T-cell (primary cell): ENCODE measurements at regions of chr21 and their contacts with region 1.

Region 1: DNA sequence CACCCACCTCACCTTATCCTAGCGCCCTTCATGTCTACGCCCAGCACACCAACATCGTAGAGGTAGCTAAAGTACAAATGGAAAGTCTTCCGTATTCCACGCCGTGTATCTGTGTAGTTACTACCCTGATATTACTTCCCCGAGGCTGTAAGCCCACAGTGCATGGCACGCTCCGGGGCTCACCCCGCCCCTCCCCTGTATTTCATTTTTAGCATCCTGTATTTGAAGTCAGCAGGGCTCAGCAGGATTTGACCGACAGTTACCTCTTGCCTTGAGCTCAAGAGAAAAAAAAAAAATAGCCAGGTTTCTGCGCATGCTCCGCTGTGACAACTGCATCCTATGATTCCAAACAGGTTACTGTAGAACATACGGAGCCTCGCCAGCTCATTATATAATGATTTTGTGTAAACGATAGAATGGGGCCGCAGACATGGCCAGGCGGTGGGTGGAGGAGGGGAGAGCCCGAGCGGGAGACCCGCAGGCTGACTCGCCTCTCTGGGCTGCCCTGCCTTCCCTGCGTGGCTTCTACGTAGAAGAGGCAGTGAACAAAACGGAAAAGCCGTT is 1.3 kb downstream of the ABCG1 start:
- DNase-seq: peak in 34 of 35 experiments; percentile 57 to 95 (median 87)
- ATAC-seq: peak; percentile 83 to 91 (median 87)
- H3K4me3 ChIP-seq: peak overlapping the region; percentile 88 to 89
- H3K4me3 Mint-ChIP-seq: peak overlapping the region; percentile 81 to 87 (median 87)
- H3K27ac ChIP-seq: peak overlapping the region; percentile 89
- H3K27ac Mint-ChIP-seq: peak overlapping the region; percentile 18 to 73
- H3K4me1 ChIP-seq: peaks cover 17 to 42% of the 10 kb centered on the region in 2 experiments
- H3K4me1 Mint-ChIP-seq: peaks cover 32 to 39% (median 35%) of the 10 kb centered on the region in 3 donors
- H3K27me3 ChIP-seq: no peaks in the 10 kb centered on the region
- H3K27me3 Mint-ChIP-seq: no peaks in the 10 kb centered on the region

Region 2: GRCh38 chr21:40882192-40882915 is 1337.9 kb before region 1 on chr21:
- CTCF ChIA-PET with region 1: no interaction called
- POLR2A ChIA-PET with region 1: no interaction called
- DNase-seq: no peak
- ATAC-seq: no peak
- H3K4me3 ChIP-seq: no peak overlapping the region
- H3K4me3 Mint-ChIP-seq: no peak overlapping the region
- H3K27ac ChIP-seq: no peak overlapping the region
- H3K27ac Mint-ChIP-seq: no peak overlapping the region
- H3K4me1 ChIP-seq: no peaks in the 10 kb centered on the region
- H3K4me1 Mint-ChIP-seq: no peaks in the 10 kb centered on the region
- H3K27me3 ChIP-seq: no peaks in the 10 kb centered on the region
- H3K27me3 Mint-ChIP-seq: peaks cover 0 to 4% of the 10 kb centered on the region in 2 donors

Region 3: DNA sequence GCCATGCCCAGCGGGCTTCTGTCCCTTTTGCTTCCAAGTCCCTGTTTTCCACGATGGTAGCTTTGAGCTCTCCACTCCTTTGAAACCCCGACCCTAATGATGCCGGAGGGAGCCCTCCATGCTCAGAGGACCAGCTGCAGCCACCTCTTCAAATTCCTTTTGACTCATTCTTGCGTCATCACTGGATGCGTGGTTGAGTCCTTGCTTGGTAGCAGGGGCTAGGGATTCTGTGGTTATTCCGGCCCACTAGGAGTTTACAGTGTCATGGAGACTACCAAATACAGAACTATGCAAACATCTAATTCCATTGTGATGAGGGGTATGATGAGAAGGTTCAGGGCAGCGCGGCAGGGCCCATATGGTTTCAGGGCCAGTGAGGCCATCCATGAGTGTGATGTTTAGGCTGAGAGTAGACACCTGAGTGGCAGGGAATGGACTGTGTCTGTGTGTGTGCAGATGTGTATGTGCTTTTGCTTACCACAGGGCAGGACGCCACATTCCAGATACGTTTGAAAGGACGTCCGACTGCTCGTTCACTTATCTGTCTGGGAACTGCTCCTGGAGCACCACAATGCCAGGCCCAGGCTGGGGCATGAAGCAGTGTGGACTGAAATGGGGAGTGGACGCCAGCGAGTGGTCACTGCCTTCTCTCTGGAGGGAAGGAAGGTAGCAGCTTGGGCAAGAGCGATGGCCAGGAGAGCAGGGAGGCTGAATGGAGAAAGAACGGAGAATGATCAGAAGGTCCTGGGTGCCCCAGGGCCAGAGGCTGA is 179.6 kb before region 1 on chr21:
- CTCF ChIA-PET with region 1: no interaction called
- POLR2A ChIA-PET with region 1: no interaction called
- DNase-seq: no peak
- ATAC-seq: no peak
- H3K4me3 ChIP-seq: no peak overlapping the region
- H3K4me3 Mint-ChIP-seq: no peak overlapping the region
- H3K27ac ChIP-seq: no peak overlapping the region
- H3K27ac Mint-ChIP-seq: no peak overlapping the region
- H3K4me1 ChIP-seq: no peaks in the 10 kb centered on the region
- H3K4me1 Mint-ChIP-seq: peaks cover 0 to 15% (median 3%) of the 10 kb centered on the region in 3 donors
- H3K27me3 ChIP-seq: peaks cover 0 to 15% of the 10 kb centered on the region in 2 experiments
- H3K27me3 Mint-ChIP-seq: no peaks in the 10 kb centered on the region

Region 4: GRCh38 chr21:42187976-42188653 is 32.1 kb before region 1 on chr21:
- CTCF ChIA-PET with region 1: interaction called in 1 of 2 experiments, 7 read pairs
- POLR2A ChIA-PET with region 1: interaction called in 1 of 2 experiments, 20 read pairs
- DNase-seq: peak; percentile 52 to 92 (median 78)
- ATAC-seq: peak; percentile 94 to 95 (median 95)
- H3K4me3 ChIP-seq: peak overlapping the region; percentile 6 to 11
- H3K4me3 Mint-ChIP-seq: peak overlapping the region; percentile 62 to 74 (median 62)
- H3K27ac ChIP-seq: peak overlapping the region; percentile 75
- H3K27ac Mint-ChIP-seq: peak overlapping the region; percentile 97 to 98
- H3K4me1 ChIP-seq: peaks cover 66 to 89% of the 10 kb centered on the region in 2 experiments
- H3K4me1 Mint-ChIP-seq: peaks cover 76 to 80% (median 79%) of the 10 kb centered on the region in 3 donors
- H3K27me3 ChIP-seq: no peaks in the 10 kb centered on the region
- H3K27me3 Mint-ChIP-seq: no peaks in the 10 kb centered on the region

Region 5: GRCh38 chr21:42193131-42193671 is 27.0 kb before region 1 on chr21:
- CTCF ChIA-PET with region 1: interaction called in 1 of 2 experiments, 7 read pairs
- POLR2A ChIA-PET with region 1: interaction called in 1 of 2 experiments, 20 read pairs
- DNase-seq: peak in 32 of 35 experiments; percentile 22 to 76 (median 50)
- ATAC-seq: peak; percentile 52 to 59 (median 58)
- H3K4me3 ChIP-seq: no peak overlapping the region
- H3K4me3 Mint-ChIP-seq: peak overlapping the region; percentile 24 to 71 (median 44)
- H3K27ac ChIP-seq: peak overlapping the region; percentile 11
- H3K27ac Mint-ChIP-seq: peak overlapping the region; percentile 73 to 79
- H3K4me1 ChIP-seq: peaks cover 50 to 72% of the 10 kb centered on the region in 2 experiments
- H3K4me1 Mint-ChIP-seq: peaks cover 70 to 81% (median 74%) of the 10 kb centered on the region in 3 donors
- H3K27me3 ChIP-seq: no peaks in the 10 kb centered on the region
- H3K27me3 Mint-ChIP-seq: no peaks in the 10 kb centered on the region

Region 6: GRCh38 chr21:42199488-42200458 is 20.4 kb before region 1 on chr21:
- CTCF ChIA-PET with region 1: interaction called in 1 of 2 experiments, 12 read pairs
- POLR2A ChIA-PET with region 1: interaction called, 3 to 6 read pairs
- DNase-seq: peak in 11 of 35 experiments; percentile 10 to 66 (median 27)
- ATAC-seq: peak; percentile 76 to 86 (median 84)
- H3K4me3 ChIP-seq: no peak overlapping the region
- H3K4me3 Mint-ChIP-seq: peak overlapping the region in 2 of 3 donors; percentile 43 to 62
- H3K27ac ChIP-seq: peak overlapping the region; percentile 14
- H3K27ac Mint-ChIP-seq: peak overlapping the region; percentile 79 to 83
- H3K4me1 ChIP-seq: peaks cover 31 to 44% of the 10 kb centered on the region in 2 experiments
- H3K4me1 Mint-ChIP-seq: peaks cover 52 to 70% (median 58%) of the 10 kb centered on the region in 3 donors
- H3K27me3 ChIP-seq: no peaks in the 10 kb centered on the region
- H3K27me3 Mint-ChIP-seq: no peaks in the 10 kb centered on the region

Region 7: DNA sequence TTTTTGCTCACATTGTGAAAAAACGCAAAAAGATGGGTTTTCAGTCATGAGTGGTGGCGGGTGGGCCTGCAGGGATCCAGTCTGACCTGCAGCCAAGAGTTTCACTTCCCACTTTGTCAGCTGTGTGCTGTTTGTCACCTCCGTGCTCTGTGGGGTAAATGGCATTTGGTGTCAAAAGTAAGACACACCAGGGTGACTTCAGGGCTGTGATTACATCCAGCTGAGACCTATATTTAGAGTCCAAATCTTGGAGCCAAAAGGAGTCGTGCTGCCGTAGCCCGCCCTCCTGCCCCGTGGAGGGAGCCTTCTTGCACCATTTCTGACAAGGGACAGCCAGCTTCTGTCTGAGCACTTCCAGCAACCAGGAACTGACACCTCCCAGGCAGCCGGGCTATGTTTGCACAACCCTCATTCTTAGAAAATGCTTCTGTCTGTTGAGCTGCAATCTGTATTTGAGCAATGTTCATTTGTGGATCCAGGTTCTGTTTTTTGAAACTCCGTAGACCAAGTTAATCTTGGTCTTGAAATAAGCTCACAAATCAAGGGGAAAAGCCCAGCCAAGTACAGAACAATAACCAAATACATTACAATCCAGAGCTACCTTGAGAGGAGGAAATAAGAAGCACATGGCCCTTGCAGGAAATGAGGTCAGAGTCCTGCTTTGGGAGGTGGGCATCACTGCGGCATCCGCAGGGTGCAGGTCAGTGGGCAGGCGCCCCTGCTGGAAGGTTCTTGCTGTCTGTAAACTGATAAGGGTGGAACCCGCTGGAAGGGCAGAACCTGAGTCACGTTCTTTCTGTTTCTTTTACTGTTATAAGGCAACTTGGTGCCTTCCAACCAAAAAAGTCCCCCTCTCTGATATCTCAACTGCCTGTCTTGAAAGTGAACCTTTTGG is 13.1 kb after region 1 on chr21:
- CTCF ChIA-PET with region 1: interaction called in 1 of 2 experiments, 29 read pairs
- POLR2A ChIA-PET with region 1: interaction called, 19 to 77 read pairs
- DNase-seq: peak in 34 of 35 experiments; percentile 55 to 93 (median 86)
- ATAC-seq: peak; percentile 38 to 63 (median 50)
- H3K4me3 ChIP-seq: peak overlapping the region; percentile 0 to 4
- H3K4me3 Mint-ChIP-seq: peak overlapping the region; percentile 38 to 86 (median 66)
- H3K27ac ChIP-seq: peak overlapping the region; percentile 97
- H3K27ac Mint-ChIP-seq: peak overlapping the region; percentile 69 to 78
- H3K4me1 ChIP-seq: peaks cover 87 to 94% of the 10 kb centered on the region in 2 experiments
- H3K4me1 Mint-ChIP-seq: peaks cover 83 to 97% (median 94%) of the 10 kb centered on the region in 3 donors
- H3K27me3 ChIP-seq: no peaks in the 10 kb centered on the region
- H3K27me3 Mint-ChIP-seq: no peaks in the 10 kb centered on the region

Region 8: GRCh38 chr21:42258153-42258884 is 38.1 kb after region 1 on chr21:
- CTCF ChIA-PET with region 1: interaction called, 5 to 10 read pairs
- POLR2A ChIA-PET with region 1: interaction called in 1 of 2 experiments, 3 read pairs
- DNase-seq: peak; percentile 62 to 89 (median 80)
- ATAC-seq: peak; percentile 81 to 94 (median 92)
- H3K4me3 ChIP-seq: no peak overlapping the region
- H3K4me3 Mint-ChIP-seq: no peak overlapping the region
- H3K27ac ChIP-seq: no peak overlapping the region
- H3K27ac Mint-ChIP-seq: peak overlapping the region in 1 of 2 donors; percentile 41
- H3K4me1 ChIP-seq: peaks cover 0 to 25% of the 10 kb centered on the region in 2 experiments
- H3K4me1 Mint-ChIP-seq: peaks cover 33 to 42% (median 37%) of the 10 kb centered on the region in 3 donors
- H3K27me3 ChIP-seq: no peaks in the 10 kb centered on the region
- H3K27me3 Mint-ChIP-seq: no peaks in the 10 kb centered on the region